ENCODE measurements at regions of chr11 and their contacts with region 1.

Region 1: GRCh38 chr11:31240338-31240904 is 129.1 kb downstream of the DCDC1 start:
- DNase-seq: peak; percentile 30
- ATAC-seq: no peak
- H3K4me3 Mint-ChIP-seq: no peak overlapping the region
- H3K27ac Mint-ChIP-seq: no peak overlapping the region
- H3K4me1 Mint-ChIP-seq: no peaks in the 10 kb centered on the region
- H3K27me3 Mint-ChIP-seq: peaks cover 3% of the 10 kb centered on the region

Region 2: GRCh38 chr11:31199378-31199777 is 41.0 kb before region 1 on chr11:
- CTCF ChIA-PET with region 1: no interaction called
- POLR2A ChIA-PET with region 1: no interaction called
- intact Hi-C with region 1: no loop called
- DNase-seq: no peak
- ATAC-seq: no peak
- H3K4me3 Mint-ChIP-seq: no peak overlapping the region
- H3K27ac Mint-ChIP-seq: no peak overlapping the region
- H3K4me1 Mint-ChIP-seq: no peaks in the 10 kb centered on the region
- H3K27me3 Mint-ChIP-seq: peaks cover 2% of the 10 kb centered on the region

Region 3: GRCh38 chr11:31218847-31219246 is 21.6 kb before region 1 on chr11:
- CTCF ChIA-PET with region 1: interaction called, 10 read pairs
- POLR2A ChIA-PET with region 1: no interaction called
- intact Hi-C with region 1: no loop called
- DNase-seq: no peak
- ATAC-seq: no peak
- H3K4me3 Mint-ChIP-seq: no peak overlapping the region
- H3K27ac Mint-ChIP-seq: no peak overlapping the region
- H3K4me1 Mint-ChIP-seq: no peaks in the 10 kb centered on the region
- H3K27me3 Mint-ChIP-seq: peaks cover 6% of the 10 kb centered on the region

Region 4: GRCh38 chr11:31958076-31958735 is 717.8 kb after region 1 on chr11:
- CTCF ChIA-PET with region 1: interaction called, 11 read pairs
- POLR2A ChIA-PET with region 1: no interaction called
- intact Hi-C with region 1: loop called (anchors 1 to 5 kb)
- DNase-seq: peak; percentile 83
- ATAC-seq: peak; percentile 53
- H3K4me3 Mint-ChIP-seq: no peak overlapping the region
- H3K27ac Mint-ChIP-seq: no peak overlapping the region
- H3K4me1 Mint-ChIP-seq: no peaks in the 10 kb centered on the region
- H3K27me3 Mint-ChIP-seq: no peaks in the 10 kb centered on the region

Region 5: DNA sequence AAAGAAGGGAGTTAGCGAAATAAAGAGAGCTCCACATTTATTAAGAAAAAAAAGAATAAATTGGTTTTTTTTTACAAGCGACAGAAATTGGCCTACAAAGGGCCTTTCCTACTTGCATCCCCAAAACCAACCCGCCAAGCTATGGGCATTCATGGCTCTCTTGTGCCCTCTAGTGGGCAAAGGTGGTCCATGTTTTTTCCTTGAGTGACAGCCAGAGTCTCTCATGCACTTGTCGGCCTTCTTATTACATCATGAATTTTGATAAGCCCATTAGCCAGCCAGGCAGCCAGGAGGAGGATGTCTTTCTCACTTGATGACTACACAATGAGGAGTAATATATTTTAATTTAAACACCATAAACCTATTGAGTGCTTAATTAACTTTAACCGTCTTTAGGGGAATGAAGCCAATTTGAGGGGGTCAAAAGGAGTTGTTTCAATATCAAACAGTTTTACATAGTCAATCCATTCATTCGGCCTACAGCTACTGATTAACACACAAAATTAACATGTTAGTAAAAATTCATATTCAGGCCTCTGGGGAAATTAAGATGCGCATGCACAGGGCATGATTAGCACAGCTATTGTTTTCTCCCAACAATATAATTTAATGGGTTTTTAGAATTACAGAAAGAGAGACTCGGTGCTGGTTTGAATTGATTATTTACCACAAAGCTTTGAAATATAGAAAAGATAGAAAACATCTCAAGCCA is 936.0 kb after region 1 on chr11:
- CTCF ChIA-PET with region 1: interaction called, 4 read pairs
- POLR2A ChIA-PET with region 1: no interaction called
- intact Hi-C with region 1: loop called (anchors 1 to 10 kb)
- DNase-seq: peak; percentile 85
- ATAC-seq: peak; percentile 78
- H3K4me3 Mint-ChIP-seq: no peak overlapping the region
- H3K27ac Mint-ChIP-seq: no peak overlapping the region
- H3K4me1 Mint-ChIP-seq: no peaks in the 10 kb centered on the region
- H3K27me3 Mint-ChIP-seq: peaks cover 7% of the 10 kb centered on the region